Activated CD8-positive, alpha-beta memory T cell treated with anti-CD3 and anti-CD28 coated beads, Interleukin-2, amount 10 ng/mL, durations not matched to agents 7 days and 5 days (primary cell): ENCODE measurements at regions of chr3 and their contacts with region 1.

Region 1: DNA sequence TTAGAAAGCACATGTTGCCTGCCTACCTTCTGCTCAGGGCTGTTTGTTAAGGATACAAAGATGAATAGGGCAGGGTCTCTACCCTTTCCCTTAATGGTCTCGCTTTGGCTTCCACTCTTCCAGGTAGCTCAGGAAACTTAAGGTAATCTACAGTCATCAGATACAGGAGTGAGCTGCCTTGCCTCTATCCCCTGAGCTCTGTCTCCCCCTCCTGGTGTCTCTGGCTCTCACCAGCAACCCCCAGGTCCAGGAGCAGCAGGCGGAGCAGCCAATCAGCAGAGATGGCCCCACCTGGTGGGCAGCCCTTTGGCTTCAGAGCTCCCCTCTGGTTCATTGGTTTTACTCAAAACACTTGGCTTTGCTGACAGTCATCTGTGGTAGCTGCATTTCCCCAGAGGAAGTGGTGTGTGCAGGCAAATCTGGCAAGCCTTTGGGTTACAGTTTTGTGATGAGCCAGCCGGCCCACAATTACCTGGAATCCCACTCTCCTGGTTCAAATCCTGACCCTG is 8.5 kb upstream of the CX3CR1 start:
- DNase-seq: peak; percentile 95
- ATAC-seq: peak; percentile 97
- H3K4me3 Mint-ChIP-seq: no peak overlapping the region
- H3K27ac Mint-ChIP-seq: peak overlapping the region; percentile 39
- H3K4me1 Mint-ChIP-seq: peaks cover 50% of the 10 kb centered on the region
- H3K27me3 Mint-ChIP-seq: peaks cover 3% of the 10 kb centered on the region

Region 2: DNA sequence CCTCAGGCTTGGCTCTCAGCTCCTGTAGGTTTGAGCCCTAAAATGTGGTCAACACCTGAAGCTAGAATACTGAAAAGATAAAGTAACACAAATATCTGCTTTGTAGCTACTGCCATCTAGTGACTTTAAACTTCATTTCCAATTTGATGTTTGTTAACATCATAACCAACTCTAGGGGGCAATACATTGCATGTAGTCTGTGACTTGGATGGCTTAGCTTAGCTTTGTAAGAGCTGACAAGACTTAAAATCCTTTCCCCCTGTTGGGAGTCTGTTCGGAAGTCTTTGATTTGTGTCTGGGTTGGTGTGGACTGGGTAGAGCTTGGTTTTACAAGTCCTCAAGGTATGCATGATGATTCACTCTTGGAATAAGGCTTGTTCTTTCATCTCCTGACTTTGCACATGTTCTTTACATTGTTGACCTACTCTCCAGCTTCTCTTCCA is 288.3 kb before region 1 on chr3:
- CTCF ChIA-PET with region 1: interaction called, 10 read pairs
- DNase-seq: no peak
- ATAC-seq: peak; percentile 65
- H3K4me3 Mint-ChIP-seq: no peak overlapping the region
- H3K27ac Mint-ChIP-seq: no peak overlapping the region
- H3K4me1 Mint-ChIP-seq: no peaks in the 10 kb centered on the region
- H3K27me3 Mint-ChIP-seq: peaks cover 20% of the 10 kb centered on the region

Region 3: GRCh38 chr3:39118079-39118478 is 170.3 kb before region 1 on chr3:
- CTCF ChIA-PET with region 1: interaction called, 160 read pairs
- DNase-seq: no peak
- ATAC-seq: no peak
- H3K4me3 Mint-ChIP-seq: no peak overlapping the region
- H3K27ac Mint-ChIP-seq: no peak overlapping the region
- H3K4me1 Mint-ChIP-seq: peaks cover 3% of the 10 kb centered on the region
- H3K27me3 Mint-ChIP-seq: peaks cover 6% of the 10 kb centered on the region

Region 4: GRCh38 chr3:39174751-39175426 is 113.5 kb before region 1 on chr3:
- CTCF ChIA-PET with region 1: interaction called, 26 read pairs
- DNase-seq: no peak
- ATAC-seq: no peak
- H3K4me3 Mint-ChIP-seq: no peak overlapping the region
- H3K27ac Mint-ChIP-seq: no peak overlapping the region
- H3K4me1 Mint-ChIP-seq: peaks cover 31% of the 10 kb centered on the region
- H3K27me3 Mint-ChIP-seq: peaks cover 3% of the 10 kb centered on the region

Region 5: DNA sequence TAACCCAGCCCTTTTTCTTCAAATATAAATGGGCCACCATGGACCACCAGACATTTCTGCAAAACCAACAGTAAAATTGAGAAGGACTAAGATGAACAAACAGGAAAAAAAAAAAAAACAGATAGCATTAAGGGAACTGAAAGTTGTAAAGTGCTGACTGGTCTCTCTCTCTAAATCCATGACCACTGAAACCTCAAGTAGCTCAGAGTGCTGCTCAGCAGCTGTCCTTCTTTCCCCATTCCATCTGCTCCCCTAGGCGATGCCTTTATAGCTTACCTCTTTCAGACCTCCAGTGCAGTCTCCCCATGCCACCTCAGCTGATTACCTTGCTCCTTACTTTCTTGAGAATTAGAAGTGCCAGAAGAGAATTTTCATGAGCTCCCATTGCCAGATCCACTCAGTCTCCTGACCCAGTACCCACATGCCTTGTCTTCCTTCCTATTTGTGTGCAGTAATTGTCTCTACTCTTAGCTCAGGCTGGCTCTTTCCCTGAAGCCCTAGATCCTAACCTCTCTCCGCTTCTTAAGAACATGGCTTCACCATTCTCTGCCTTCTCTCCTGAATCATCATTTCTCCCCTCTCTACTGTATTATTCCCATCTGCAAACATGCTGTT is 72.1 kb before region 1 on chr3:
- CTCF ChIA-PET with region 1: interaction called, 18 read pairs
- DNase-seq: no peak
- ATAC-seq: peak; percentile 51
- H3K4me3 Mint-ChIP-seq: no peak overlapping the region
- H3K27ac Mint-ChIP-seq: peak overlapping the region; percentile 37
- H3K4me1 Mint-ChIP-seq: peaks cover 33% of the 10 kb centered on the region
- H3K27me3 Mint-ChIP-seq: peaks cover 29% of the 10 kb centered on the region

Region 6: DNA sequence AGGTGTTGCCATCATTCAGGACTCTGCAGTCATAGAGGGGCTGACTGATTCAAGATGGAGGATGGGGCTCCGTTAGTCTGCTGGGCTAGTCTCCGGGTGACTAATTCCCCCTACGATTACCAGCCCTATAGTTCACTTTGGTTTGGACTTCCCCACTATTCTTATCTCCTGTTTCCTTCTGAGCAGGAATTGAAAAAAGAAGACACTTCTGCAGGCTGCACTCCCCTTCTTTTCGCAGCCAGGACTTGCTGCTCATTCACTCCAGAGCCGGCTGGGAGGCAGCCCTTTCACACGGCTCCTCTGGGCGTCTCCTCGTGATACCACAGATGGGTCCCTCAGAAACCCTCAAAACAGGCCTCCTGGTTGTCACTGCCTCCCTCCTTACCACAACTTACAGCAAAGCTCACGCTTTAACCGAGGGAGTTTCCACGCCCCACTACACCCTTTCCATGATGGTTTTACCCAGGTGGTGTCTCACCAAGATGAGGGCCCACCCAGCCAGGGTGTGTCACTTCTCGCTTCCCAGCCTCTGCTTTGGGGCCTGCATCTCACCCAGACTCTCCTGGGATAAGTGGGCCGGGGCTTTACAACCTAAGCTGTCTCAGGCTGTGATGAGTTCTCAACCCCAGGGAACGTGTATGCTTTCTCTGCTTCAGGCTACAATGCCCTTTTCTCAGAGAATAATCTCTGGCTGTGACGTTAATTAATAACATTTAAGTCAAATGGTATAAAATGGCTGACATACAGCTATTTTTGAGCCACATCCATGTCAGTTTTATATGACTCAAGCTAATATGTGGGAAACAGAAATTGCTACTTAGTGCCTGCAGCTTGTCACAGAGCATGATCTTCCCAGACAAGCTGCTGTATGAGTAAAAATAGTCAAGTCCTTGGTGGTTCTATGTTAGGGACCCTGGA is 20.5 kb before region 1 on chr3:
- CTCF ChIA-PET with region 1: interaction called, 30 read pairs
- DNase-seq: peak; percentile 89
- ATAC-seq: peak; percentile 90
- H3K4me3 Mint-ChIP-seq: peak overlapping the region; percentile 17
- H3K27ac Mint-ChIP-seq: peak overlapping the region; percentile 85
- H3K4me1 Mint-ChIP-seq: peaks cover 32% of the 10 kb centered on the region
- H3K27me3 Mint-ChIP-seq: peaks cover 14% of the 10 kb centered on the region

Region 7: GRCh38 chr3:39383045-39383880 is 94.9 kb after region 1 on chr3 and contains the start of gene SLC25A38:
- CTCF ChIA-PET with region 1: interaction called, 107 read pairs
- DNase-seq: peak; percentile 91
- ATAC-seq: peak; percentile 82
- H3K4me3 Mint-ChIP-seq: peak within 1 kb of the TSS; percentile 96
- H3K27ac Mint-ChIP-seq: peak within 1 kb of the TSS; percentile 99
- H3K4me1 Mint-ChIP-seq: peaks cover 46% of the 10 kb centered on the region
- H3K27me3 Mint-ChIP-seq: no peaks in the 10 kb centered on the region
- total RNA-seq, gene SLC25A38: 36.2 to 55.9 TPM